ENCODE measurements at regions of chr10 and their contacts with region 1.

Region 1: DNA sequence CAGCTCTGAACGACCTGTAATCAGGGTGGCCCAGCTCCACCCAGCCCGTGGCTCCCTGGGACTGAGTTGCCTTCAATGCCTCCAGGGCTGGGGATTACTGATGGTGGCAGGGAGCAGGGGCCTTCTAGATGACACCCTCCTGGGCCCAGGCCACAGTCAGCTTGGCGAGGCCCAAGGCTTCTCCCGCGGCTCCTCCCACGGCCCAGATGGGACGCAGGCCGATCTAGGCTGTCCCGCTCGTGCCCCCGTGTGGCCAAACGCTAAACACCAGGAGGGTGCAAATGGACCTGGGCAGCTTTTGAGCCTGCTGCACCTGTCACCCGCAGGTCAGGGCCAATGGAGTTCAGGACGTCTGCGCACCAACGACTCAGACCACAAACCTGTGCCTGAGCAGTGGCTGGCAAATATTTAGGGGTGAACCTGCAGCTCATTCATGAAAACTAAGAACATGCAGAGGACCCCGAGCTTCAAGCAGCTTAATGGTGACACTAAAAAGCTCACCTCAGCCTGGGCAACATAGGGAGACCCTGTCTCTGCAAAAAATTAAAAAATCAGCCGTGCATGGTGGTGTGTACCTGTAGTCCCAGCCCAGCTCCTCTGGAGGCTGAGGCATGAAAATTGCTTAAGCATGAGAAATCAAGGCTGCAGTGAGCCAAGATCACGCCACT is 43.2 kb downstream of the ASB13 start:
- DNase-seq: peak; percentile 69
- H3K4me3 ChIP-seq: no peak overlapping the region
- H3K27ac ChIP-seq: no peak overlapping the region
- H3K27me3 ChIP-seq: no peaks in the 10 kb centered on the region
- CTCF ChIP-seq: peak; percentile 95

Region 2: GRCh38 chr10:5446390-5446926 is 176.8 kb before region 1 on chr10:
- in situ Hi-C with region 1: loop called (anchors 25 kb)
- DNase-seq: peak; percentile 82
- H3K4me3 ChIP-seq: peak overlapping the region; percentile 69
- H3K27ac ChIP-seq: peak overlapping the region; percentile 31
- H3K27me3 ChIP-seq: no peaks in the 10 kb centered on the region
- CTCF ChIP-seq: peak; percentile 5

Region 3: GRCh38 chr10:5746197-5746596 is 123.0 kb after region 1 on chr10:
- in situ Hi-C with region 1: no loop called
- DNase-seq: no peak
- H3K4me3 ChIP-seq: no peak overlapping the region
- H3K27ac ChIP-seq: no peak overlapping the region
- H3K27me3 ChIP-seq: no peaks in the 10 kb centered on the region
- CTCF ChIP-seq: no peak